AG04449 (cell line): ENCODE measurements at regions of chr9 and their contacts with region 1.

Region 1: DNA sequence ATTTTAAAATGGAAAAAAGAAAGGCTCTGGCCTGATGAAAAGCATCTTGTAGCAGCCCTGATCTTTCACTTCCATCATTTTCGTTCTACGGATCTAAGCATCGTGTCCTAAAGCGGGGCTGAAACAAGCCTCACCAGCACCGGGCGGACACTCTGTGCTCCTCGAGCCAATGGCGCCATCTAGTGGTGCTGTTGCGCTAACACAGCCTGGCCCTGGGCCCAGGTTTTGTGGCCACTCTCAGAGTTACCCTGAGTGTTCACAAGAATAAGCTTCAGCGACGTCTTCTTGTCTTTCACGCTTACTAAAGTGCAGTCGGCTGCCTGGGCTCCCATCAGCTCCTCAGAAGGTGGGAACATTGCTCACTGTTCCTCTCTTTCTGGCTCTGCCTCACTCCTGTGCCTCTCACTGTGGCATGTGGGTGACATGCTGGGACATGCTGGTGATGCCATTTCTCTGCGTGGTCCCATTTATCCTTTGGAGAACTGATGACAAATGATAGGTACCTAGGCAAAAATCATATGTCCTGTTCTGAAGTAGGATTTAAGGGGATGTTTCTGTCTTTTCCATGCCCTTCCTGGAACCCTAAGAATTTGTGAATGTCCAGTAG is 32.7 kb downstream of the DMRT3 start:
- DNase-seq: no peak
- H3K4me3 ChIP-seq: no peak overlapping the region
- CTCF ChIP-seq: peak; percentile 96

Region 2: DNA sequence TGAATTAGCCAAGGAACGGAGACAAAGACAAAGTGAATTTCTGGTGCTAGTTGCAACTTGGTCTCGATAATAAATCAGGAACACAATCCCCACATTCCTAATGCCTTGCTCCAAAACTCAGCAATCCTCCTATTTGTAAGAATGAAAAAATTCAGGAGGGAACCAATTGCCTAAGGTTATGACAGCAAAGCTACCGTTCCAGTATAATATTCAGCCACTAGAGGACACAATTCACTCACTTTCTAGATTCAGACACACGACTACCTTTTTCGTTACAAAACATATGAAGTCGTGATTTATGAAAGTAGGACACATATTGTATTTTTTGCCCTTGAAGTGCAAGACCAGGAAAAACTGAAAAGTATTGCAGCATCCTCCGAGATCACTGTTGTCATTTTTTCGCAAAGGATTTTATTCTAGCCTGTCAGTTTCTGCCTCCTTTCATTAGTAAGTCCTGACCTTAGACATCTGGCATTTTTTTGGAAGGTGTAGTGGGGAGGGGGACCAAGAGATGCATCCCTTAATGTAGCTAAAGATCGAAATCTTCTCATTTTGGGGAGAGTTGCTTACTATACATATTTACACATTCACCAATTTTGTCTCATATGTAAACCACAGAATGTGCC is 661.4 kb before region 1 on chr9:
- CTCF ChIA-PET with region 1: interaction called, 17 read pairs
- POLR2A ChIA-PET with region 1: no interaction called
- DNase-seq: no peak
- H3K4me3 ChIP-seq: no peak overlapping the region
- CTCF ChIP-seq: peak; percentile 40

Region 3: DNA sequence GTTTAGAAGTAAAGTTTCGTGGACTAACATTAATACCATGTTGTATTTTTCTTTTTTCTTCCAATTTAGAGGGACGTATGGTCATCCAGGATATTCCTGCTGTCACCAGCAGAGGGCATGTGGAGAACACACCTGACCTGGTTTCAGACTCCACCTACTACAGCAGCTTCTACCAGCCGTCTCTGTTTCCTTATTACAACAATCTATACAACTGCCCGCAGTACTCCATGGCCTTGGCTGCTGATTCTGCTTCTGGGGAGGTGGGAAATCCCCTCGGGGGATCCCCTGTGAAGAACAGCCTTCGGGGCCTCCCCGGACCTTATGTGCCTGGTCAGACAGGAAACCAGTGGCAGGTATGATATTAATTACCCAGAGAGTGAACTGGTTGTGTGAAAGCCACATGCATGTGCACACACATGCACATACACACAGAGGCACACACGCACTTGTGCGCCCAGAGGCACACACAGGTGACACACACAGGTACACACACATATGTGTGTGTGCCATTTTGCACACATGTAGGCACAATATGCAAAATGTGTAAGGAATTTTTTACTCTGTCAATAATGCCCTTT is 115.3 kb before region 1 on chr9:
- CTCF ChIA-PET with region 1: interaction called, 45 read pairs
- POLR2A ChIA-PET with region 1: no interaction called
- DNase-seq: no peak
- H3K4me3 ChIP-seq: no peak overlapping the region
- CTCF ChIP-seq: peak; percentile 61

Region 4: GRCh38 chr9:994005-994404 is 15.2 kb before region 1 on chr9:
- CTCF ChIA-PET with region 1: interaction called, 15 read pairs
- POLR2A ChIA-PET with region 1: no interaction called
- DNase-seq: no peak
- H3K4me3 ChIP-seq: no peak overlapping the region
- CTCF ChIP-seq: no peak

Region 5: GRCh38 chr9:1031951-1032601 is 22.9 kb after region 1 on chr9:
- CTCF ChIA-PET with region 1: interaction called, 11 read pairs
- POLR2A ChIA-PET with region 1: no interaction called
- DNase-seq: no peak
- H3K4me3 ChIP-seq: no peak overlapping the region
- CTCF ChIP-seq: no peak